A549 (cell line): ENCODE measurements at regions of chr7 and their contacts with region 1.

Region 1: GRCh38 chr7:37833107-37833817 is 15.1 kb upstream of the NME8 start:
- DNase-seq: peak; percentile 49 to 73
- ATAC-seq: peak; percentile 39 to 67; a peak in 4 of 6 replicates
- H3K4me3 ChIP-seq: peak overlapping the region; percentile 31
- H3K27ac ChIP-seq: peak overlapping the region; percentile 63 to 82
- H3K4me1 ChIP-seq: peaks cover 10% of the 10 kb centered on the region; the same call in 1 of the 3 replicates
- CTCF ChIP-seq: peak; percentile 85
- EP300 ChIP-seq: no peak
- POLR2A ChIP-seq: no peak
- RAD21 ChIP-seq: peak; percentile 78 to 84

Region 2: GRCh38 chr7:37806152-37806551 is 27.1 kb before region 1 on chr7:
- CTCF ChIA-PET with region 1: no interaction called
- POLR2A ChIA-PET with region 1: no interaction called
- DNase-seq: no peak
- ATAC-seq: no peak
- H3K4me3 ChIP-seq: no peak overlapping the region
- H3K27ac ChIP-seq: no peak overlapping the region
- H3K4me1 ChIP-seq: no peaks in the 10 kb centered on the region
- CTCF ChIP-seq: no peak
- EP300 ChIP-seq: no peak
- POLR2A ChIP-seq: no peak
- RAD21 ChIP-seq: no peak

Region 3: DNA sequence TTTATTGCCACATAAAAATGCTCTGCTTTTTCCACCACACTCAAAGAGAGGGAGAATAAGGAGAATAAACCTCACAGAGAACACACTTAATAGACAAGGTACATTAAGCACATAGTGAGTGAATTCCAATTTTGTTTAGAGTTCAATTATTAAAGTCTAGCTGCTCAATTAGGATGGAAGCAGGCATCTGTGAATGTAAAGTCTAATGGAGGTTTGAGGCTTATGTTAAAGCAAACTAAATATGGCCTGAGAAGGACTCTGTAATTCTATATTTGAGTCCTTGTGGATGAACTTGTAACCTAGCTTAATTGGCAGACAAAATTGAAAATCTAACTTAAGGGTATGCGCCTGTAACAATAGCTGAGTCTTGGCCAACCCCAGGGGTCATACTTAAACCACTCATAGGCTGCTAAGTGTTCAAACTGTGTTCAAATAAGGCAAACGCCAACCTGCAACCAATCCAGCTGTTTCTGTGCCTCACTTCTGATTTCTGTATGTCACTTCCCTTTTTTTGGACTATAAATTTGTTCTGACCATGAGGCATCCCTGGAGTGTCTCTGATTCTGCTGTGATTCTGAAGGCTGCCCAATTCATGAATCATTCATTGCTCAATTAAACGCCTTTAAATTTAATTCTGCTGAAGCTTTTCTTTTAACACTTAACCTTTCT is 16.2 kb before region 1 on chr7:
- CTCF ChIA-PET with region 1: interaction called, 11 read pairs
- POLR2A ChIA-PET with region 1: no interaction called
- DNase-seq: no peak
- ATAC-seq: no peak
- H3K4me3 ChIP-seq: no peak overlapping the region
- H3K27ac ChIP-seq: no peak overlapping the region
- H3K4me1 ChIP-seq: peaks cover 4% of the 10 kb centered on the region; the same call in 1 of the 3 replicates
- CTCF ChIP-seq: no peak
- EP300 ChIP-seq: no peak
- POLR2A ChIP-seq: no peak
- RAD21 ChIP-seq: no peak